ENCODE measurements at regions of chr3 and their contacts with region 1.

Region 1: GRCh38 chr3:141094790-141095545 is 43.8 kb downstream of the SPSB4 start:
- DNase-seq: peak; percentile 93 to 94
- ATAC-seq: peak; percentile 83
- H3K4me3 ChIP-seq: no peak overlapping the region
- H3K27ac ChIP-seq: peak overlapping the region in 1 of 2 donors; percentile 68
- H3K4me1 ChIP-seq: peaks cover 0 to 3% of the 10 kb centered on the region in 2 donors
- H3K27me3 ChIP-seq: no peaks in the 10 kb centered on the region

Region 2: GRCh38 chr3:141050576-141051442 is 44.2 kb before region 1 on chr3 and contains the start of gene SPSB4:
- intact Hi-C with region 1: loop called in 1 of 2 experiments (anchors 5 kb)
- DNase-seq: peak; percentile 62 to 91
- ATAC-seq: peak; percentile 85
- H3K4me3 ChIP-seq: peak within 1 kb of the TSS; percentile 49 to 74
- H3K27ac ChIP-seq: no peak within 1 kb of the TSS
- H3K4me1 ChIP-seq: no peaks in the 10 kb centered on the region
- H3K27me3 ChIP-seq: no peaks in the 10 kb centered on the region
- total RNA-seq, gene SPSB4: 1.0 to 2.0 TPM

Measured in aorta (tissue), 5 donors.